Activated CD8-positive, alpha-beta T cell treated with anti-CD3 and anti-CD28 coated beads, Interleukin-2, amount 10 ng/mL, durations not matched to agents 7 days and 5 days (primary cell): ENCODE measurements at regions of chr4 and their contacts with region 1.

Region 1: DNA sequence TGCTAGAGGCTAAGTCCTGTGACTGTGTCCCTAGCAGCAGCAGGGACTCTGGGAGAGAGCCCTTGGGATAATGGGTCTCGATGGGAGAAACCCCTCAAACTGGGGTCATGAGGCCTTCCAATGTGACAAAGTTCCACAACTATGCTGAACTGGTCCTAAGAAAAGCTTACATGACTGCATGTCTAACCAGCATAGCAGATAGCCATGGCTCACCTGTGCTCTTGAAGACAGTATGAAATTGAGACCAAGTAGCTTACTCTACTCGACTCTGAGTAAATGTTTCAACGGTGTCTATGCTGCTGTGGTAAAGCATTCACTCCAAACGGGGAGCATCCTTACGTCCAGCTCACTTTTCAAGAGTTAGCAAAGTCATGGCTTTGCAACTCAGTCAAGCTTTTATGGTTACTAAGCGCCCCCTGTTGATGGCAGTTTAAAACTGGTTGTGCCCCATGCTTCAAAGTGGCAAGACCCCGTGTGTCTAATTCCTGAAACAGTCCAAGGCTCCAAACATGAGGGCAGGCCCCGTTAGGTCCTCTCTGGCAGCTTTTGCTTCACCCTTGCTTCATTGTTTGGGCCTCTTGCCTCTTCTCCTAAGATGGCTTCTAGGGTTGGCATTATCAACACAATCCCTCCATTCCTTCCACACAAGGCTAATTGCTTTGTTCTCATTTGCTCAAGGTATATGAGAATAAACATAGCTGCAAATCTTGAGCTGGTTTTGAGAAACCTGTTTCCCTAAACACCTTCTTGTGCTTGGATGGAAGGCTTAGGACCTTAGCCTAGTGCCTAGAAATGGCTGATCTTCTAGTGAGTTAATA is 46.6 kb downstream of the CCNG2 start:
- DNase-seq: peak; percentile 82
- ATAC-seq: peak; percentile 80
- H3K4me3 Mint-ChIP-seq: no peak overlapping the region
- H3K27ac Mint-ChIP-seq: no peak overlapping the region
- H3K4me1 Mint-ChIP-seq: peaks cover 12% of the 10 kb centered on the region
- H3K27me3 Mint-ChIP-seq: peaks cover 6% of the 10 kb centered on the region

Region 2: DNA sequence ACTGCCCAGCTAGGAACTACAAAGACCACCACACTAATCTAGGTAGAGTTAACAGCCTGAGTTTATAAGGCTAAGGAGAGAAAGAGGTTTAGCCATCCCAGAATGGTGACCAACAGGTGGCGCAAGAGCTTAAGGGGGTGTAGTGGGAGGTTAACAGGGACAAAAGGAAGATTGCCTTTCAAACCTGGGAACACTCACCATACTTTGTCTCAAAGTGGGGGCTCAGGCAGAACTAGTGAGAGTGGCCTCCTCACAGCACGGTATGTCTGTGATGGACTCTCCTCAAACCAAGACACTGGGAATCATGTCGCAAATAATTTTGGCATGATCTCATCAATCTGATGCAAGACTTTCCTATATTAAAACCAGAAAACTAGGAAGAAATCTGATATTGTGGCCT is 151.2 kb before region 1 on chr4:
- CTCF ChIA-PET with region 1: interaction called, 116 read pairs
- POLR2A ChIA-PET with region 1: interaction called, 4 read pairs
- DNase-seq: peak; percentile 72
- ATAC-seq: peak; percentile 60
- H3K4me3 Mint-ChIP-seq: no peak overlapping the region
- H3K27ac Mint-ChIP-seq: no peak overlapping the region
- H3K4me1 Mint-ChIP-seq: no peaks in the 10 kb centered on the region
- H3K27me3 Mint-ChIP-seq: no peaks in the 10 kb centered on the region

Region 3: GRCh38 chr4:77082886-77083608 is 120.5 kb before region 1 on chr4:
- CTCF ChIA-PET with region 1: interaction called, 30 read pairs
- POLR2A ChIA-PET with region 1: no interaction called
- DNase-seq: no peak
- ATAC-seq: no peak
- H3K4me3 Mint-ChIP-seq: no peak overlapping the region
- H3K27ac Mint-ChIP-seq: no peak overlapping the region
- H3K4me1 Mint-ChIP-seq: peaks cover 12% of the 10 kb centered on the region
- H3K27me3 Mint-ChIP-seq: no peaks in the 10 kb centered on the region

Region 4: GRCh38 chr4:77104791-77105540 is 98.6 kb before region 1 on chr4:
- CTCF ChIA-PET with region 1: interaction called, 296 read pairs
- POLR2A ChIA-PET with region 1: no interaction called
- DNase-seq: no peak
- ATAC-seq: no peak
- H3K4me3 Mint-ChIP-seq: no peak overlapping the region
- H3K27ac Mint-ChIP-seq: no peak overlapping the region
- H3K4me1 Mint-ChIP-seq: peaks cover 9% of the 10 kb centered on the region
- H3K27me3 Mint-ChIP-seq: peaks cover 14% of the 10 kb centered on the region

Region 5: DNA sequence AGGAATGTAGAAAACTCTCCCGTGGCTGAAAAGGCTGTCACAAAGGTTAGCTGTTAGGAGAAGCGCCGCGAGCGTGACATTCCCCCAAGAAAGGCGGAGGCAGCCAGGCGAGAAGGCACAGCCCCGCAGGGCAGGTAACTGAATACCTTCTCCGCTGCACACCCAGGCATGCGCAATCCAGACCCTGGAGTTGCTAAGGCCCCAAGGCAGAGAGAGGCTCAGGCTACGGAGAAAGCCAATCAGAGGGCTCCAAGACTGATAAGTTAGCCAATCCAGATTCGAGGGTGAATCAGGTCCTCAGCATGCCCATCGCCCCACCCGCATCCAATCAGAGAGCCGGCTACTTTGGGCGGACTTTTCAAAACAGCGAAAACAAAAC is 47.1 kb before region 1 on chr4:
- CTCF ChIA-PET with region 1: interaction called, 59 read pairs
- POLR2A ChIA-PET with region 1: interaction called, 4 read pairs
- DNase-seq: peak; percentile 98
- ATAC-seq: peak; percentile 97
- H3K4me3 Mint-ChIP-seq: peak overlapping the region; percentile 84
- H3K27ac Mint-ChIP-seq: peak overlapping the region; percentile 93
- H3K4me1 Mint-ChIP-seq: peaks cover 56% of the 10 kb centered on the region
- H3K27me3 Mint-ChIP-seq: no peaks in the 10 kb centered on the region

Region 6: GRCh38 chr4:77215107-77215506 is 11.5 kb after region 1 on chr4:
- CTCF ChIA-PET with region 1: interaction called, 35 read pairs
- POLR2A ChIA-PET with region 1: no interaction called
- DNase-seq: no peak
- ATAC-seq: no peak
- H3K4me3 Mint-ChIP-seq: no peak overlapping the region
- H3K27ac Mint-ChIP-seq: no peak overlapping the region
- H3K4me1 Mint-ChIP-seq: no peaks in the 10 kb centered on the region
- H3K27me3 Mint-ChIP-seq: peaks cover 9% of the 10 kb centered on the region

Region 7: DNA sequence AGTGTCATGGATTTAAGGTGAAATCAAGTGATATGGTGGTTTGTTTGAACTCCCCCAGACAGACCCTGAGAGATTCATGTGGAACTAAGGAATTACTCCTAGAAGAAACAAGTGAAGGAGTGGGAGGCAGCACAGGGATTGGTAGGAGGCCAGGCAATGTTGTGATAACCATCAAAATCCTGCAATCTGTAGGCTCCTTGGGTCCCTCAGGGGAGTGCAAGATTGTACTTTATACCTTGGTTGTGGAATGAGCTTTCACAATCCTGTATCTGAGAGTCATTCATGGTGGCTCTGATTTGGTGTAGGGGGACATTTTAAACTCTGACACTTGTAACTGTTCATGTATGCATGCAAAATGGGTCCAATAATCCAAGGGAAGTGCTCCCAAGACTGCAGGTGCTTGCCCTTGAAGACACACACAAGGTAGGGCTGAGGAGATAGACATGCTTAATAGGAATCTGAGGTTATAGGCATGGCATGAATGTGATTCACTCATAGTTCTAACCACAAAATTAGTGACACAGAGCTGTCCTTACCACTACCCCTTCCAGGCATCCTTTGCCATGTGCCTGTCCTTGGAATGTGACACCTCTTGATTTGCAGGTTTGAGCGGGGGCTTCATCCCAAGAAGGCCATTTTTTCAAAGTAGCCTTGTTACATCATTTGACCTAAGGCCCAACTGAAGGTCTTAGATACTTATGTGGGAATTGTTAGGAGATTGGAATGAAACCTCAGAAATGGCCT is 65.7 kb after region 1 on chr4:
- CTCF ChIA-PET with region 1: no interaction called
- POLR2A ChIA-PET with region 1: no interaction called
- DNase-seq: no peak
- ATAC-seq: no peak
- H3K4me3 Mint-ChIP-seq: no peak overlapping the region
- H3K27ac Mint-ChIP-seq: no peak overlapping the region
- H3K4me1 Mint-ChIP-seq: no peaks in the 10 kb centered on the region
- H3K27me3 Mint-ChIP-seq: no peaks in the 10 kb centered on the region